GM13976 (cell line): ENCODE measurements at regions of chr18 and their contacts with region 1.

Region 1: GRCh38 chr18:26103579-26103978 is 13.2 kb upstream of the SS18 start:
- DNase-seq: no peak
- CTCF ChIP-seq: no peak

Region 2: DNA sequence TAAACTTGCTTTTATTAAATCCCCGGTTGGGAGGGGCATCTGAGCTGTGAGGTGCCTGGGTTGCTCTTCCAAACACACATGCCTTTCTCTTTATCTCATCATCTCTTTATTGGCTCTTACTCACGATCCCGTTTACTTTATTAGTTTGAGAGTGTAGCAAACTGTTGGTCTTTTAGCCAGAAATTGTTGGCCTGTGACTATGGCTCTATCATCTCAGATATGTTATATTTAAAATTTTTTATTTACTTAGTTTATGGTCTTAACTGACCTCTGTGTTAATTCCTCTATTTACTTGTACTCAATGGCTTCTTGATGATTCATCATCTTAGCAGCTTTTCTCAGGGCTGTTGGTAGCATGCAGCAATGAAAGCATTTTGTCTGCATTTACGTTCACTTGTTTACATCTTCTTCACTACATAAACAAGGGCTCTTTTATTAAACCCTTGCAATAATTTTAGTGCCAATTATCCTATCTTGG is 1234.8 kb before region 1 on chr18:
- in situ Hi-C with region 1: loop called (anchors 25 kb)
- DNase-seq: no peak
- CTCF ChIP-seq: no peak

Region 3: DNA sequence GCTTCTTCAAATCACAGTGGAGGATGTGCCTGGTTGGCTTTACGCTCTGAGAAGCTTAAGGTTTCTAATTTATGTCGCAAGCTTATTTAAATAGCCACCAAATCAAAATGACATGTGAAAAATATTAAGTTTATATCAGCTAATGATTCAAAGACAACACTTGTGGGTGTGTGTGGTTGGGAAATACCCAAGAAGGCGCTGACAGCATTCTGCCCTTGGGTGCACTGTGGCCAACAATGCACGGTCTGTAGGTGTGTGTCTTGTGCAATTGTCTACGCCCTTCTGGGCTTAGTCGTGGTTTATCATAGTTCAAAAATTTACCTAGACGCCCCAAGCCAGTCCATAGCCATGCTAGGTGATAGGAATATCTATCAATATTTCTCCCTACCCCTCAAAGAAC is 383.9 kb after region 1 on chr18:
- in situ Hi-C with region 1: no loop called
- DNase-seq: peak; percentile 54
- CTCF ChIP-seq: no peak